ENCODE measurements at regions of chr14 and their contacts with region 1.

Region 1: DNA sequence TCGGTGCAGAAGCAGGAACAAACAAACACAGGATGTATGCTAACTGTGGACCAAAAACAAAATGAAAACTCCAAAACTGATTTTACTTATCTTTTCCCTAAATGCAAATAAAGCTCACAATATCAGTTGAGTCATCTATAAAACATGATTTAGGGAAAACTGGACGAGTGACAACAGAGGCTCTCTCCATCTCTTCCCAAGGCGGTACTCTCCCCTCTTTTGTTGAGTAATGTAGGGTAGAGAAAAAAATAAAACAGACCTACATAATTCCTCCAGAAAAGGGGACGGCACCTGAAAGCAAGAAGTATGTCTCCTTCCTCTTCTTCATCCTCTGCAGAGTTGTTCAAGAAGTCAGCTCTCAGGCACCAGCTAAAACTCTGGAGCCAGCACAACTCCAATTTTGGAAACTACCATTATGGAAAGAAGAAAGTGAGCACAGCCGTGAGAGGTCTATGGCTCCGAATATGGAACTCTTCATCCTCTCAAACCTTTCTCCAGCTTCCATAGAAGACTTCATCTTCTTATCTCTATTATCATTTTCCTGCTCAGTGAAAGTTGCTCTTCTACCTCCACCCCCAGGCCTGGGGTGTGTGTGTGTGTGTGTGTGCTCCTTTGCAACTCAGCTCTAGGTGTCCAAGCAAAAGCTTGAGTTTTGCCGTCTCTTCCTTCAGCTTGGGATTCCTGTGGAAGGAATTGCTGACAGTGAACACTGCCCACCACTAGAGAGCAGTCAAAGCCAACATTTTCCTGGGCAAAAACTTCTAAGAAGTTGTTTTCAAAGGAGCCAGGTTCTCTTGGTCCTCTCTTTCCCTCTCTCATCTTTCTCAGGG is 155.4 kb downstream of the DIO2 start:
- DNase-seq: peak; percentile 23
- H3K4me3 ChIP-seq: peak overlapping the region in 1 of 2 experiments; percentile 35; a peak in 1 of 4 replicates
- H3K27ac ChIP-seq: no peak overlapping the region; a peak in 1 of 4 replicates
- H3K4me1 ChIP-seq: no peaks in the 10 kb centered on the region
- H3K27me3 ChIP-seq: no peaks in the 10 kb centered on the region
- CTCF ChIP-seq: peak; percentile 83
- EP300 ChIP-seq: no peak
- RAD21 ChIP-seq: peak; percentile 86

Region 2: GRCh38 chr14:80074905-80075574 is 19.2 kb after region 1 on chr14:
- CTCF ChIA-PET with region 1: interaction called, 11 read pairs
- POLR2A ChIA-PET with region 1: no interaction called
- DNase-seq: no peak
- H3K4me3 ChIP-seq: no peak overlapping the region
- H3K27ac ChIP-seq: no peak overlapping the region
- H3K4me1 ChIP-seq: no peaks in the 10 kb centered on the region
- H3K27me3 ChIP-seq: no peaks in the 10 kb centered on the region
- CTCF ChIP-seq: no peak
- EP300 ChIP-seq: no peak
- RAD21 ChIP-seq: no peak

Region 3: DNA sequence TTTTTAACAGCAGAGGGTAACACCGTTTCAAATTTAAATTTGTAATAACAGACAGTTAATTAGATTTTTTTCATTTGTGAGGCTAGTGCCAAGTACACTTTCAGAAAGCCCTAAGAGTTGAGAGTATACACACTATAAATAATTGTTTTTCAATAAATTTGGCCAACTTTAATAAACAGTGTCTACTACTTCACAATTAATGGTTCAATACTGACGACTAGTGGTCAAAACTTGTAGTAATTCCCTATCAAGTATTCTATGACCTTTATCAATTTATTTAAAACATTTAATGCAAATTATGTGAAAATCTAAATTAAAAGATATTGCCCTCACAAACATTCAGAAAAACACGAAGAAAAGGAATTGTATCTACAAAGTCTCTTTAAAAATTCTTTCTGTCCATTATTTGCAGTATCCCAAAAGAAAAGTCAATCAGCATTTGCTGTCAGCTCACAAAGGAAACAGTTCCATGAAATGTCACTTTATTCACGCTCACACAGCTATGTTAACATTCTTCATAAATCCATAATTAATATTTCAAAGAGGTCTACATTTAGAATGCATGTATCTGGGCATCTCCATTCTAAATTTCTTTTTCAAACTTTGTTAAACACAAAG is 794.4 kb after region 1 on chr14:
- CTCF ChIA-PET with region 1: interaction called, 37 read pairs
- POLR2A ChIA-PET with region 1: no interaction called
- DNase-seq: peak; percentile 5
- H3K4me3 ChIP-seq: no peak overlapping the region
- H3K27ac ChIP-seq: no peak overlapping the region
- H3K4me1 ChIP-seq: no peaks in the 10 kb centered on the region
- H3K27me3 ChIP-seq: no peaks in the 10 kb centered on the region
- CTCF ChIP-seq: peak; percentile 77
- EP300 ChIP-seq: no peak
- RAD21 ChIP-seq: peak; percentile 77

Region 4: DNA sequence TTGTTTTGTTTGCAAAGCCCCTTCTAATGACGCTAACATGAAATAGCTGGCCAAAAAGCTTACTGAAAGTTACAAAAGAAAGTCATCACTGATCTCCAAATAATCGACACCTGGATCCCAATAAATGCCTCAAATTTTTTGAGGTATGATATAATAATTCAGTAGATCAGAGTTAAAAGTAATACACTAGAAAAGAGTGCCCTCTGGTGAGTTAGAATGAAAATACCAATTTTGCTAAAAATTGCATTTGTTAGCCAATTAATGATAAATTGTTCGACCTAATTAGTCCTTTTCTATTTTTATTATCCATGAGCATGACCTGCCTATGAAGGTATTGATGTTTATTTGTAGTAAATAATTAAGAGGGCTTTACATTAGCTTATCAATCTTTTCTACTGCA is 807.1 kb after region 1 on chr14:
- CTCF ChIA-PET with region 1: interaction called, 13 read pairs
- POLR2A ChIA-PET with region 1: no interaction called
- DNase-seq: no peak
- H3K4me3 ChIP-seq: no peak overlapping the region
- H3K27ac ChIP-seq: no peak overlapping the region
- H3K4me1 ChIP-seq: no peaks in the 10 kb centered on the region
- H3K27me3 ChIP-seq: no peaks in the 10 kb centered on the region
- CTCF ChIP-seq: peak; percentile 53
- EP300 ChIP-seq: no peak
- RAD21 ChIP-seq: peak; percentile 29

Region 5: DNA sequence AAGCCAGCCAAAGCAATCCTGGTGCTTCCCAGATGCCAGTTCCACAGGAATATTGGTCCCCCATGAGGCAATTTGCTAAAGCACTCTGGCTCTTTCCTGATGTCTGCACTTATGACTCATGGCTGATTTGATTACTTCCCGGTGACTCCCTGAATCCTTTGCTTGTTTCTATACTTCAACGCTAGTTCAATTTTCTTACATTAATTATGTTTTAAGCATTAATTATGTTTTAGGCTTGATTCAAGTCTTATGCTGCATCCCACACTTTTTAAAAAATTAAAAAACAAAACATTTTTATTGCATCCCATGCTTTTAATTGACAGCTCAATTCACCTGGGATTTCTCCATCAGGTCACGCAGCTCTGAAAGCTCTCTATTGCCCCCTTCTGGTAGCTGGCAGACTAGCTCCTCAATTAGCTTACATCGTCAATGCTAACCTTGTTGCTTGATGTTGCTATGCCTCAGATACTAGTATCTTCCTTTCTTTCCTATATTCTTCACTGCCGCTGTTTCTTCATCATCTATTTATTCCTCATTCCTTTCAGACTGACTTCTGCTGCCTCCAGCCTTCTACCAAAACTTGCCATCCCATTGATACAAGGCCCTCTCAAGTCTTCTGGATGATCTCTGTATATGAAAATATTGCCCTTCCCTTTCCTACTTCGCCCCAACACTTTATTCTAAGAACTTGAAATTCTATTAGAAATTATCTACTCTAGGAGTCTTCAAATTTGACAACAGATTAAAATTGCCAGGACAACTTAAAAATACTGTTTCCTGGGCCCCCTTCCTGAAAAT is 931.6 kb after region 1 on chr14:
- CTCF ChIA-PET with region 1: interaction called, 14 read pairs
- POLR2A ChIA-PET with region 1: no interaction called
- DNase-seq: peak; percentile 69
- H3K4me3 ChIP-seq: peak overlapping the region in 1 of 2 experiments; percentile 42; a peak in 1 of 4 replicates
- H3K27ac ChIP-seq: no peak overlapping the region
- H3K4me1 ChIP-seq: no peaks in the 10 kb centered on the region; a peak in 1 of 4 replicates
- H3K27me3 ChIP-seq: peaks cover 13% of the 10 kb centered on the region; the same call in 1 of the 2 replicates
- CTCF ChIP-seq: peak; percentile 97
- EP300 ChIP-seq: no peak
- RAD21 ChIP-seq: peak; percentile 85

Measured in SK-N-SH (cell line).